ENCODE measurements at regions of chr6 and their contacts with region 1.

Region 1: DNA sequence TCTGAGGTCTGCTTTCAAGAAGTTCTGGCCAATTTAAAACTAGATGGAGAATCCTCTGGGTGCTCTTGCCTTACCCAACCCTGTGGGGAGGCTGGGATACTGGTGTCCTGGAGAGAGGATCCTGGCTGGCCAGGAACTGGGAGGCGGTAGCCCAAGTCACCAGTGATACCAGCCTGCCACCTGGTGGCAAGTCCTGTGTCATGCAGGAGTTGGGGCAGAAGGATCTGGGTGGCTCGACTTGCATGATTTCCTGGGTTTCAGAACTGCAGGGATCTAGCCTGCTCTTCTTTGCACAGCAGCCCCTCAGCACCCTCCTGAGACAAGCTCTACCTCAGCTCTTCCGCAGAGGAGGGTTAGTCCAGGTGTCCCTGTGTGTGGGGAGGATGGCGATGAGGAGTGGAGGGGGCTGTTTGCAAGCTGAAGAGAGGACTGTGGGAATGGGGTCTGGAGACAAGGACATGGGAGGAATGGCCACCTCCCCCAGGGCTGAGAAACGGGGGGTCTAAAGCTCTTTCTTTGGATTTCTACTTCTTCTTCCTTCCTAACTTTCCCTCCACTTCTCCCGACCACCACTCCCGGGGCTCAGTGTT is 4.2 kb downstream of the KCNK17 start:
- DNase-seq: peak; percentile 70
- ATAC-seq: peak; percentile 72
- H3K4me3 Mint-ChIP-seq: no peak overlapping the region
- H3K27ac Mint-ChIP-seq: no peak overlapping the region
- H3K4me1 Mint-ChIP-seq: peaks cover 18% of the 10 kb centered on the region
- H3K27me3 Mint-ChIP-seq: peaks cover 41% of the 10 kb centered on the region

Region 2: GRCh38 chr6:38973178-38974054 is 336.6 kb before region 1 on chr6:
- CTCF ChIA-PET with region 1: interaction called, 20 read pairs
- POLR2A ChIA-PET with region 1: no interaction called
- DNase-seq: peak; percentile 48
- ATAC-seq: peak; percentile 74
- H3K4me3 Mint-ChIP-seq: no peak overlapping the region
- H3K27ac Mint-ChIP-seq: no peak overlapping the region
- H3K4me1 Mint-ChIP-seq: no peaks in the 10 kb centered on the region
- H3K27me3 Mint-ChIP-seq: peaks cover 33% of the 10 kb centered on the region

Region 3: DNA sequence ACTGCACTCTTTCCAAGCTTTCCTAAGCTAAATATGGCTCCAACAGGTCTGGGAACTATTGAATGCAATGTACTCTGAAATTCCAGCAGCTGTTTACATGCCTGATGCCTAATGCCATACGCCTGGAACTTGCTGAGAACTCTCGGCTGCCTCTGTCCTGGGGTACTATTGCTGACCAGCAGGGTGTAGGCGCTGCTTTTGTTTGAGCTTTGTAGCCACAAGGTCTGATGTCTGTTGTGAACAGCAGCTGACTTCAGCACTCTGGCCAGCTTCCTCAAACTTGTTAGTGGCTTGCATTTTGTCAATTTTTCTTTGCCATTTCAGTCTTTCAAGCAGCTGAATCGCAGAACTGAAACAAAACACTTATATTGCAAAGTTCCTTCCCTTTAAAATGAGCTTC is 221.7 kb before region 1 on chr6:
- CTCF ChIA-PET with region 1: interaction called, 11 read pairs
- POLR2A ChIA-PET with region 1: no interaction called
- DNase-seq: peak; percentile 42
- ATAC-seq: peak; percentile 61
- H3K4me3 Mint-ChIP-seq: no peak overlapping the region
- H3K27ac Mint-ChIP-seq: no peak overlapping the region
- H3K4me1 Mint-ChIP-seq: peaks cover 13% of the 10 kb centered on the region
- H3K27me3 Mint-ChIP-seq: peaks cover 44% of the 10 kb centered on the region

Region 4: DNA sequence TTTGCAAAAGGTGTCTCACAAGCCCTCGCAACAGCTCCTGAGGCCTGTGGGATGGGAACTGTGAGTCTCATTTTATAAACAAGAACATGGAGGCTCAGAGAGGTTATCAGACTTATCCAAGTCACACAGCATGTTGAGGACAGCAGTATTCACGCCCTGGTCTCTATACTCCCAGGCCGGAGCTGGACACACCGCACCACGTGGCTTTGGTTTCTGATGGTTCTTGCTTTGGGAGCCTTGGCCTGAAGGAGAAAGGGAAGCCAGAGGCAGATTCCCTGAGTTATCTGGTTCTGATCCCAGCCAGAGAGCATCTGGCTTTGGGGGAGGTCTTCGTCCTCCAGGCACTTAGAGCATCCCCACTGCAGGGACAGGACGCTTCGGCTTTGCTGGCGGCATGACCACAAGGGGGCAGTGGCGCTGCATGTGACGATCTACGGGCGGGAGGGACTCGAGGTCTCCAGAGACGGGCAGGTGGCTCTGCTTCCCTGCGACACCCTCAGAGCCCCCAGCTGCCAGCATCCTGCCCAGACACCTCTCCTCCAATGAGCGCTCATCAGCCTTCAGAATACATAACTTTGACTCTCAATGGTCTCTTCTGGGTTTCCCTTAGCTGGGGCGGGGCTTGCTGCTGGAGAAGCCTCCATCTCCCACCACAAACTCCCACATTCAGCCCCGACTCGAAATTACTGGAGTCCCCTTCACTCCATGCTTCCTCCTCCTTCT is 143.7 kb before region 1 on chr6:
- CTCF ChIA-PET with region 1: interaction called, 179 read pairs
- POLR2A ChIA-PET with region 1: no interaction called
- DNase-seq: peak; percentile 89
- ATAC-seq: peak; percentile 96
- H3K4me3 Mint-ChIP-seq: no peak overlapping the region
- H3K27ac Mint-ChIP-seq: peak overlapping the region; percentile 33
- H3K4me1 Mint-ChIP-seq: peaks cover 9% of the 10 kb centered on the region
- H3K27me3 Mint-ChIP-seq: peaks cover 2% of the 10 kb centered on the region